Right ventricle myocardium inferior (tissue), 1 donor: ENCODE measurements at regions of chr20 and their contacts with region 1.

Region 1: DNA sequence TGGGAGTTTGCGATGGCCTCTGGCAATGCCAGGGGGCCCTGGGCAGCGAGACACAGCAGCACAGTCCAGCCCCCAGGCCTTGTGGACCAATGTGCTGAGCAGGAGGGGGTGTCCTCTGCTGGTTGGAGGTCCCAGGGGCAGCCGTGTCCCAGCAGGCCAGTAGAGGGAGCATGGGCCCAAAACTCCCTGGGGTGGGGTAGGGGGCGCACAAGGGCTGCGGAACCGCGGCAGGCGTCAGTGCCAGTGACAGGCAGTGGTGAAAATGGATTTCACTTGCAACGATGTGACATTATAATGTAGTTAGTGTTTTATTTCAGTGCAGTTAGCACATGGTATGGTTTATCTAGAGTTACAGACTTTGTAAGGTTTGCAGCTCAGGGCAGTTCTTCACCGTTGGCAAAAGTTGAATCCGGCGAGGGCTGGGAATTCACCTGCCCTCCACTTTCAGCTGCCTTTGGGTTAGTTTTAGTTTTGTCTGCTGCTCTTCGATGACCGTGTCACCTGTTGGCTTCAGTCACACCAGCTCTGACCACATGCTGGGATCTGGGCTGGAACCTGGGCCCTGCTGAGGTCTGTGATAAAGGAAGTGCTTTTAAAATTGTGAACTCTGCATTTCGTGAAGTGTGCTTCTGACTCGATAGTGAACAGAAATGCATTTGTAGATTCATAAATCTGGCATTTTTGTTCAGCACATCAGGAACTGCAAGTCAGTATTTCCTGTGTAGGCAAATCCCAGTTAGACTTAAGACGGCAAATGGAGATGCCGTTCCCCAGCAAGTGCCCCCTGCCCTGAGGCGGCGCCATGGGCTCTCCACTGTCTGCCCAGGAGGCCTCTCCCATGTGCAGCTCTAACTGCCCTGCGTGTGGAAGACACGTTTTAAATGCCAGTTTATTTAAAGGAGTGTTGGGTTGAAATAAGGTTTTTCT is 46.8 kb downstream of the PYGB start:
- DNase-seq: no peak
- ATAC-seq: peak; percentile 10

Region 2: DNA sequence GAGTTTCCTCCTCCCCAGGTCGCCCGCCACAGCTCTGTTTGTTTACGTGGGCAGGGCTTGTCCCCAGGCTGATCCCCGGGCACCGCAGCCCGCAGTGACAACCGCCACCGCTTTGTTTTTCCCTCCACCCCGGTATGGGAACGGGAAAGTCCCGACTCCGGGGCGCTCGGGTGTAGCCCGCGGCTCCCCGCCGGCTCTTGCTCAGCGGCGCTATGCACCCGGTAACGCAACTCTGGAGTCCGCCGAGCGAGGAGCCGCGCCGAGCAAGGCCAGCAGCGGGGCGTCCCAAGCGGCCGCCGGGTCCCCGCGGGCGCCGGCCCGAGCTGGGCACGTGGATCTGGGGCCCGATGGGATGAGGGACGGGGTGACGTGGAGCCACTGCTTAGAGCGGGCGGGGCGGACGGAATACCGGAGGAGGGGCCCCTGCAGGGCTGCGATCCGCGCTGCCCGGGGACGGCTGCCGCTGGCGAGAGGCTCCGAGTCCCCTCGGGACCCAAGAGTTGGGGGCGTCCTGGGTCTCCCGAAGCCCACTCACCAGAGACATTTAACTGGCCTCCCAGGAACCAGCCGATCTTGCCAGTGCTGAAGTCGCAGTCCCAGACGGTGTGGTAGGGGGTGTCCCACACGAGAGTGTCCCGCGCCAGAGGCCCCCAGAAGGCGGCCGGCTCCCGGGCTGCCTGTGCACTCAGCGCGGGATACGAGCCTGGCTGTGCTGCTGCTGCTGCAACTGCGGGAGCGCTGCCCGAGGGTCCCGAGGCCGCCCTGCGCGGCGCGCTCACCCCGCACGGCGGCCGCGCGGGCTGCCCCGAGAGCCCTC is 237.3 kb before region 1 on chr20:
- intact Hi-C with region 1: loop called (anchors 10 kb)
- DNase-seq: peak; percentile 90
- ATAC-seq: peak; percentile 73

Region 3: DNA sequence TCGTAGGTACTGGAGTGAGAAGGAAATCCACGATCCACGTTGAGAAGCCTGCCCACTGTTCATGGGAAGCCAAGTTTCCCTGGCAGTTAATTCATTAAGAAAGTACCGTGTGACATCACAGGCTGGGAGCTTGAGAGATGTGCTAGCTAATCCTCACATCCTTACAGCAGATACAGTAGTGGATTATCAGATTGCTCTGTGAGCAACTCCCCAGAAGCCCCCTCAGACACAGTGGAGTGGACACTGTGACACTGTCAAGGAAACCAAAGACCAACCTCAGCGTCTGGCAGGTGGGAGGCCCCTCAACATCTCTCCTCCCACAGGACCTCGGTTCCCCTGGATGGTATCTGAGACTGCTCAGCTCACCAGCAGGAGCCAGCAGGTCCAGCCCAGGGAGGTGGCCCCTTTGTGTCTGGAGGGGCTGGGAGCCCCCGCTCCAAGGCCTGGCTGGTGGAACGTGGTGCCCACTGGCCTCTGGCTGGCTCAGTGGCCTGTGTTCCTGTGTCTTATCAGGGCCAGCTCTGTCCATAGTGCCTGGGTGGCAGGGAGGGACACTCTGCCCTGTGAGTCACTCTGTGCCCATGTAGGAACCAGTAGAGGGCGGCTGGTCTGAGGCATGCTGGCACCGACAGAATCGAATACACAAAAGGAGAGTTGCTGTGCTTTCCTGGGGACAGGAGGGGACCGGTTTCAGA is 39.6 kb before region 1 on chr20:
- intact Hi-C with region 1: loop called (anchors 5 kb)
- DNase-seq: no peak
- ATAC-seq: peak; percentile 91

Region 4: GRCh38 chr20:25273541-25274358 is 21.0 kb before region 1 on chr20:
- intact Hi-C with region 1: loop called (anchors 2 kb)
- DNase-seq: peak; percentile 67
- ATAC-seq: no peak

Region 5: GRCh38 chr20:25372584-25373336 is 78.0 kb after region 1 on chr20:
- intact Hi-C with region 1: no loop called
- DNase-seq: no peak
- ATAC-seq: no peak

Region 6: DNA sequence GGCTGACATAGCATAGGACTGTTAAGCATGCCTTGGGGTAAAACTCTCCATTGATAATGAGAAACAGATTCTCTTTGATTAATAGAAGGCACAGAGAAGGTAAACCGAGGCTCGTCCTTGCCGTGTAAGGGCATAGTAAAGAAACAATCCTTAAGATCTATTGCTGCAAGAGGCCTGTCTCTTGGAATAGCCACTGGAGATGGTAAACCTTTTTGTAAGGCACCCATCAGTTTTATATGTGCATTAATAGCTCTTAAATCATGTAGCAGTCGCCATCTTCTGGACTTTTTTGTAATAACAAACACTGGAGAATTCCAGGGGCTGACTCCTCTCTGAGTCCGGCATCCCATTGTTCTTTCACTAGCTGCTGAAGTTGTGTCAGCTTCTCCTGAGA is 104.3 kb after region 1 on chr20:
- intact Hi-C with region 1: loop called (anchors 5 kb)
- DNase-seq: no peak
- ATAC-seq: peak; percentile 86

Region 7: DNA sequence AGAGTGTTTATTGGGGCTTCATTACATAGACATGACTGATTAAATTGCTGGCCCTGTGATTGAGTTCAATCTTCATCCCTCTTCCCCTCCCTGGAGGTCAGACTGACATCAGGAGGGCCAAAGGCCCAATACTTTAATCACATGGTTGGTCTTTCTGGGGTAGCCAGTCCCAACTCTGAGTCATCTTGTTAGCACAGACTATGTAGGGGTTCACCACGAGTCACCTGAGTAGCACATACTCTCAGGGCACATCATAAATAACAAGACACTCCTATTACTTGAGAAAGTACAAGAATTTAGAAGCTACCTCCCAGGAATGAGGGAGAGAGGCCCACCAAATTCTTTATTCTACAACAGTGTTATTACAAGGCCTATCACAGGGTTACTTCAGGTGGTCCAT is 124.1 kb after region 1 on chr20:
- intact Hi-C with region 1: no loop called
- DNase-seq: no peak
- ATAC-seq: no peak